RWPE1 (cell line): ENCODE measurements at regions of chr1 and their contacts with region 1.

Region 1: GRCh38 chr1:3695326-3696217 is 43.3 kb downstream of the TP73 start:
- DNase-seq: peak; percentile 65
- H3K27ac ChIP-seq: peak overlapping the region; percentile 100
- CTCF ChIP-seq: peak; percentile 91

Region 2: GRCh38 chr1:3676581-3677470 is 18.7 kb before region 1 on chr1:
- CTCF ChIA-PET with region 1: no interaction called
- POLR2A ChIA-PET with region 1: no interaction called
- DNase-seq: no peak
- H3K27ac ChIP-seq: 0 out of 2 replicates have a peak overlapping the region, but pooled peaks have one; percentile 5
- CTCF ChIP-seq: no peak

Region 3: DNA sequence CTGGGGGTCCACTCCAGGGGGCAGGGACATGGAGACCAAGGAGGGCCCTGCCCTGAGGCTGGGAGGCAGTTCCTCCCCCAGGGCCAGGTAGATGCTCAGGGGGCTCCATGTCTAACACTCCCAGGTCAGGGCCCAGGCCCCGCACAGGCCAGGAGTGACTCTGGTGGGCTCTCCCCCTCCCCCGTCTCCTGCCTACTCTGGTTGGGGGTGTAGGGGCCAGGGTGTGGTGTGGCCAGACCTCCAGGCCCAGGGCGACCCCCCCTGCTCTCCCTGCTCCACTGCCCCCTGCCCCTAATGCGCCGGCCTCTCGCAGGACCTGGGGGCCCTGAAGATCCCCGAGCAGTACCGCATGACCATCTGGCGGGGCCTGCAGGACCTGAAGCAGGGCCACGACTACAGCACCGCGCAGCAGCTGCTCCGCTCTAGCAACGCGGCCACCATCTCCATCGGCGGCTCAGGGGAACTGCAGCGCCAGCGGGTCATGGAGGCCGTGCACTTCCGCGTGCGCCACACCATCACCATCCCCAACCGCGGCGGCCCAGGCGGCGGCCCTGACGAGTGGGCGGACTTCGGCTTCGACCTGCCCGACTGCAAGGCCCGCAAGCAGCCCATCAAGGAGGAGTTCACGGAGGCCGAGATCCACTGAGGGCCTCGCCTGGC is 37.0 kb after region 1 on chr1:
- CTCF ChIA-PET with region 1: interaction called, 11 read pairs
- POLR2A ChIA-PET with region 1: no interaction called
- DNase-seq: no peak
- H3K27ac ChIP-seq: peak overlapping the region; percentile 76
- CTCF ChIP-seq: no peak